Left ventricle myocardium inferior (tissue), 1 donor: ENCODE measurements at regions of chr10 and their contacts with region 1.

Region 1: GRCh38 chr10:109895095-109895818 is 28.1 kb downstream of the XPNPEP1 start:
- DNase-seq: peak; percentile 74
- H3K4me3 ChIP-seq: peak overlapping the region; percentile 10
- H3K27ac ChIP-seq: peak overlapping the region; percentile 84
- H3K4me1 ChIP-seq: peaks cover 97% of the 10 kb centered on the region
- H3K27me3 ChIP-seq: no peaks in the 10 kb centered on the region
- CTCF ChIP-seq: no peak

Region 2: GRCh38 chr10:109934958-109935706 is 39.9 kb after region 1 on chr10:
- intact Hi-C with region 1: no loop called
- DNase-seq: no peak
- H3K4me3 ChIP-seq: peak overlapping the region; percentile 6
- H3K27ac ChIP-seq: peak overlapping the region; percentile 66
- H3K4me1 ChIP-seq: peaks cover 26% of the 10 kb centered on the region
- H3K27me3 ChIP-seq: no peaks in the 10 kb centered on the region
- CTCF ChIP-seq: no peak

Region 3: DNA sequence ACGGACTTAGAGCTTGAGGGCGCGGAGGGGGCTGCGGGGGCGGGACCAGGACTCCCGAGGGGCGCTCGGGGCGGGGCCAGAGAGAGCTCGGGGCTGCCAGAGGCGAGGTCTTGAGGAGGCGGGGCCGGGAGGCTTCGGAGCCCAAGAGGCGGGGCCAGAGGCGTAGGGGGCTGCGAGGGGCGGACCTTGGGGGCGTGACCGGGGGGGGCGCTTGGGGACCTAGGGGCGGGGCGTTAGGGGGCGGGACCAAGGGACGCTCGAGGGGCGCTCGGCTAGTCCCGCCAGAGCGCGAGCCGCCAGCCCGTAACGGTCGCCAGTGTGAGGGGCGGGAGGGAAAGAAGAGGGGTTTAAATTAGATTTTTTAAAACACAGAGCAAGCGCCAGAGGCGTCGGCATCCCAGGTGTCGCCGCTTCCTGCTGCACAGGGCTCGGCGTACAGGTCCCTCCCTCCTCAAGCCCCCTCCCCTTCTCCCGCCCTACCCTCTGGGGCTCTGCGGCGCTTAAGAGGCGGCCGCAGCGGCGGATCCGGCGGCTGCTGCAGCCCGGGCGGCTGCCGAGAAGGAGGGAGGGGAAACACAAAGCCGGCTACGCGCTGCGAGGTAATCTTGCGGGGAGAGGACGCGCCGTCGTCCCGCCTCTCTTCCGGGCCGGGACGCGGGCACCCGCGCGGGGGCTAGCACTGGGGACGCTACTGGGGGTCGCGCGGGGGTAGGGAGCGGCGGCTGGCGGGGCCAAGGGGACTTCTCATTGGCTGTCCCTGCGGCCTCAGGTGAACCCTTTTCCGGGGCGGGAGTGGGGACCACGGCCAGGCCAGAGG is 112.7 kb after region 1 on chr10 and contains the start of gene ADD3:
- intact Hi-C with region 1: loop called (anchors 5 kb)
- DNase-seq: peak; percentile 96
- H3K4me3 ChIP-seq: peak within 1 kb of the TSS; percentile 93
- H3K27ac ChIP-seq: peak within 1 kb of the TSS; percentile 99
- H3K4me1 ChIP-seq: peaks cover 88% of the 10 kb centered on the region
- H3K27me3 ChIP-seq: no peaks in the 10 kb centered on the region
- CTCF ChIP-seq: no peak
- total RNA-seq, gene ADD3: 113 TPM